ENCODE measurements at regions of chr16 and their contacts with region 1.

Region 1: DNA sequence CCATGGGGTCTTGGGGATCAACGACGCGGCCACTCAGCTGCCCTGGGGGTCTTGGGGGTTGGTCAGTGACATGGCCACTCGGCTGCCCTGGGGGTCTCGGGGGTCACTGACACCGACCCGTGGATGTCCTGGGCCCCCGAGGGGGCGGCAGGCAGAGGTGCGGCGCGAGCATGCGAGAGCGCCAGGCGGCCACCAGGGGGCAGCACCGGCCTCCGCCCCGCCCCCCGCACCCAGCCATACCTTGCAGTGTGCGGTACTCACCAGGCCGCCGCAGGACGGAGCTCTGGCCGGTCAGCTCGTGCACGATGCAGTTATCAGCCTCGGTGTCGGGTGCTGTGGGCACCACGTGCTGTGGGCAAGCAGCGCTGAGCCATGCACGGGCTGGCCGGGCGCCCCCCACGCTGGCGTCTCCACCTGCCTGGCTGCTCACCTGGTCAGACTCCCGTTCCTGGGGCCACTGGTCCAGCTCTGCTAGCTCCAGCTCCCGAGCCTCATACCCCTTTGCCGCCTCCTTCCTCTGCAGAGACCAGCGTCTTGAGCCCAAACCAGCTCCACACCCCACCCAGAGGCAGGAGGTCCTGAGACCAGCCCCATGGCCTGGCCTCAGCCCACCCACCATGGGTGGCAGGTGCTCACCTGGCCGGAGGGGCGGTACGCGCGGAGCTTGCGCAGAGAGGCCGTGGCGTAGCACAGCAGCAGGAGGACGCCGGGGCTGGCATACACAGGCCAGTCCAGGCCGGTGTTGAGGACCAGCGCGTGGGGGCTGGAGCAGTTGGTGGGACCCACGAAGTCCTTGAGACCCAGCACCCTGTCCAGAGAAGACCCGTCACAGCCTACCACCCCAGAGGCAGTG is 31.2 kb downstream of the CTU2 start:
- DNase-seq: peak; percentile 51 to 86 (median 73)
- H3K4me3 ChIP-seq: no peak overlapping the region
- H3K4me3 Mint-ChIP-seq: no peak overlapping the region
- H3K27ac ChIP-seq: no peak overlapping the region
- H3K27ac Mint-ChIP-seq: peak overlapping the region in 2 of 8 donors; percentile 17 to 47
- H3K4me1 ChIP-seq: peaks cover 10% of the 10 kb centered on the region
- H3K4me1 Mint-ChIP-seq: peaks cover 0 to 8% (median 0%) of the 10 kb centered on the region in 3 donors
- H3K27me3 ChIP-seq: no peaks in the 10 kb centered on the region
- H3K27me3 Mint-ChIP-seq: no peaks in the 10 kb centered on the region

Region 2: GRCh38 chr16:88700636-88701482 is 36.7 kb before region 1 on chr16:
- CTCF ChIA-PET with region 1: interaction called, 11 read pairs
- POLR2A ChIA-PET with region 1: interaction called, 3 read pairs
- DNase-seq: peak; percentile 93 to 98 (median 96)
- H3K4me3 ChIP-seq: peak overlapping the region; percentile 97
- H3K4me3 Mint-ChIP-seq: peak overlapping the region; percentile 94 to 97 (median 96)
- H3K27ac ChIP-seq: peak overlapping the region; percentile 93
- H3K27ac Mint-ChIP-seq: peak overlapping the region; percentile 92 to 100 (median 99)
- H3K4me1 ChIP-seq: peaks cover 78% of the 10 kb centered on the region
- H3K4me1 Mint-ChIP-seq: peaks cover 39 to 64% (median 55%) of the 10 kb centered on the region in 3 donors
- H3K27me3 ChIP-seq: no peaks in the 10 kb centered on the region
- H3K27me3 Mint-ChIP-seq: peaks cover 0 to 4% of the 10 kb centered on the region in 2 donors

Region 3: GRCh38 chr16:88754912-88755744 is 17.6 kb after region 1 on chr16:
- CTCF ChIA-PET with region 1: interaction called, 30 read pairs
- POLR2A ChIA-PET with region 1: no interaction called
- DNase-seq: no peak
- H3K4me3 ChIP-seq: no peak overlapping the region
- H3K4me3 Mint-ChIP-seq: no peak overlapping the region
- H3K27ac ChIP-seq: no peak overlapping the region
- H3K27ac Mint-ChIP-seq: peak overlapping the region in 1 of 8 donors; percentile 53
- H3K4me1 ChIP-seq: peaks cover 21% of the 10 kb centered on the region
- H3K4me1 Mint-ChIP-seq: peaks cover 16 to 41% (median 18%) of the 10 kb centered on the region in 3 donors
- H3K27me3 ChIP-seq: no peaks in the 10 kb centered on the region
- H3K27me3 Mint-ChIP-seq: no peaks in the 10 kb centered on the region

Region 4: GRCh38 chr16:88811769-88812512 is 74.4 kb after region 1 on chr16 and contains the start of gene APRT:
- CTCF ChIA-PET with region 1: interaction called, 23 read pairs
- POLR2A ChIA-PET with region 1: no interaction called
- DNase-seq: peak; percentile 94 to 98 (median 96)
- H3K4me3 ChIP-seq: peak within 1 kb of the TSS; percentile 74
- H3K4me3 Mint-ChIP-seq: peak within 1 kb of the TSS; percentile 84 to 99 (median 96)
- H3K27ac ChIP-seq: peak within 1 kb of the TSS; percentile 78
- H3K27ac Mint-ChIP-seq: peak within 1 kb of the TSS; percentile 72 to 98 (median 95)
- H3K4me1 ChIP-seq: peaks cover 14% of the 10 kb centered on the region
- H3K4me1 Mint-ChIP-seq: peaks cover 8 to 35% (median 17%) of the 10 kb centered on the region in 3 donors
- H3K27me3 ChIP-seq: no peaks in the 10 kb centered on the region
- H3K27me3 Mint-ChIP-seq: peaks cover 0 to 4% of the 10 kb centered on the region in 2 donors
- total RNA-seq, gene APRT: 338 to 348 TPM

Region 5: DNA sequence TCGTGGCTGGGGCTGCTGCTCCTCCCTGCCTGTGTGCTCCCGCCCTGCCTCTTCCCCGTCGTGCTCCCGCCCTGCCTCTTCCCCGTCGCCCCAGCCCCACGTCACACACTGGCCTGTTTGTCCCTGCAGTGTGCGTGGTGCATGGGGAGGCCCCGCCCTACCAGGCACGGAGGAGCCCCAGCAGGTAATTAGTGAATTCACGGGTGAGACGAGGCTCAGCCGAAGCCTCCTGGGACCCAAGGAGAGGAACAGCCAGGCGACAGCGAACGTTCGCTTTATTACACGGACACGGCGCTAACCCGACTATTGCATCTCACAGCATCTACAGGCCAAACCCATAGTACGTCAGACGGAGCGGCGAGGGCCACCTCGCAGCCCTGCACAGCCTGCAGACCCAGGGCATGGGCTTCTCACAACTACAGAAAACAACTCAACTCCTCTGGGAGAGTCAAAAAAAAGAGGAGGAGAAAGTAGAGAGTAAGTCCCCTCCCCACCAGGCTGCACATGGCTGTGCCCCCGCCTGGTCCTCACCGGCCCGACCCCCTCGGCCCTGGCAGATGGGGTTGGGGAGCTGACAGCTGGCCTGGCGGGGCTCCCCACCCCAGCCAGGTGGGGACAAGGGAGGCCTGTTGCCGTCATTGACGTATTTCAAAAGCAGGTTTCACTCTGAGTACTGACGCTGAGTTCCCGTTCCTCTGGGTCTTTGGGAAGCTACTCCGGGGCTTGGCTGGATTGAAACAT is 133.3 kb after region 1 on chr16:
- CTCF ChIA-PET with region 1: no interaction called
- POLR2A ChIA-PET with region 1: no interaction called
- DNase-seq: no peak
- H3K4me3 ChIP-seq: no peak overlapping the region
- H3K4me3 Mint-ChIP-seq: no peak overlapping the region
- H3K27ac ChIP-seq: peak overlapping the region; percentile 4
- H3K27ac Mint-ChIP-seq: no peak overlapping the region
- H3K4me1 ChIP-seq: no peaks in the 10 kb centered on the region
- H3K4me1 Mint-ChIP-seq: peaks cover 0 to 3% (median 0%) of the 10 kb centered on the region in 3 donors
- H3K27me3 ChIP-seq: peaks cover 6% of the 10 kb centered on the region
- H3K27me3 Mint-ChIP-seq: peaks cover 2 to 20% of the 10 kb centered on the region in 2 donors

Region 6: DNA sequence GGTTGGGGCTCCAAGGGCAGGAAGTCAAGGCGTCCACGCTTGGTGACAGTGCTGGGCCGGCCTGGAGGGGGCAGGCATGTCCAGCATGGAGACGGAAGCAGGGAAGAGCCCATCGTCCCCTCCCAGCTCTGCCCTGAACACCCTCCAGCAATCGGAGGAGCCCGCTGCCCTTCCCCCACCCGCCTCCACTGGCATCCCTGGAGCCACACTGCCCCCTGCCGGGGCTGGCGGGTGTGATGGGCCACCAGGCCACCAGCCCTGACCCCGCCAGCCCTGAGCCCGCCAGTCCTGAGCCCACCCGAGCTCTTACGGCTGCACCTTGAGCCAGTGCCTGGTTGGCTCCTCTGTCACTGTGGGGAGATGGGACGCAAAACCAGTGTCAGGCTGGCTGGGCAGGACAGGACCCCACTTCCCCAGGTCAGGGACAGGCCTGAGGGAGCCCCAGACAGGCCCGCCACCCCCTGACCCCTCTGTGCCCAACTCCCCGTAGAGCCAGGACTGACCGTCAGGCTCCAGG is 430.0 kb after region 1 on chr16:
- CTCF ChIA-PET with region 1: interaction called, 10 read pairs
- POLR2A ChIA-PET with region 1: no interaction called
- DNase-seq: peak; percentile 71 to 84 (median 74)
- H3K4me3 ChIP-seq: no peak overlapping the region
- H3K4me3 Mint-ChIP-seq: no peak overlapping the region
- H3K27ac ChIP-seq: no peak overlapping the region
- H3K27ac Mint-ChIP-seq: no peak overlapping the region
- H3K4me1 ChIP-seq: peaks cover 25% of the 10 kb centered on the region
- H3K4me1 Mint-ChIP-seq: peaks cover 6 to 16% (median 8%) of the 10 kb centered on the region in 3 donors
- H3K27me3 ChIP-seq: no peaks in the 10 kb centered on the region
- H3K27me3 Mint-ChIP-seq: peaks cover 0 to 4% of the 10 kb centered on the region in 2 donors